Endothelial cell of umbilical vein (primary cell): ENCODE measurements at regions of chr16 and their contacts with region 1.

Region 1: DNA sequence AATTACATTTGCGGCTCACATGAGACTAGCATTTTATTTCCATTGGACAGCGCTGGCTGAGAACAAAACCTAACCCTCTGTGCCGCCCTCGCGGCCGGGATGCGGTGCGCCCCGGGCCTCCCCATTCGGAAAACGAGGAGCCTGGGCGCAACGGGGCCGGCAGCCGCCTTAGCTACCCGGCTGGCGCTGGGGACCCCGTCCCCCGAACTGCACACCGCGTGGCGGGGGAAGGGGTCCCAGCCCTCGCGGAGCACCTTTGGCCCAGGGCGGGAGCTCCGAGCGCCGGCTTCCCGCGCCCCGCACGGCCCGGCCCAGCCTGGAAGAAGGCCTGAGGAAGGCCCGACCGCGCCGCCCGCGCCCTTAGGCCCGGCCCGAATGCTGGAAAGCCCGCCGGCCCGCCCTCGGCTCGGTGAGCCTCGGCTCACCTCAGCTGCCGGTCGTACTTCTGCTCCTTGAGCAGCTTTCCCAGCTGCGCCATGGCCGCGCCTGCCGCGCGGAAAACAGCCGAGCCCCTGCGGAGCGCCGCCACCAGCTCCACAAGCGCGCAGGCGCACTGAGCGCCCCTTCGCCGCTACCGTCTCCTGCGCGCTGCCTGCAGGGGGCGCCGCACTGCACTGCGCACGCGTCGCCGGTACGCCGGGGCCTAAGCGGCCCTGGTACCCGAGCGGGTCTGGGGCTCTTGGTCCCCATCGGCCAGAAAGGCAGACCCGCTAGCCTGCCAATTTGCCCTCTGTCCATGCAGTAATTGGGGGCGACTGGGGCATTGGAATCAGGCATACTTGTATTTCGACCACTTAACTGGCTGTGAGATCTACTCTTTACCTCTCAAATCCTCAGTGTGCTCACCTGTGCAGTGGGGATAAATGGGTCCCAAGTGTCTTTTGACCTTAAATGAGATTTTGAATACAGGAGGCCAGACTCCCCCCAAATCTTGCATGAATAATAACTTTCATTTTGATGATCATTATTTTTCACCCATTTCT is at the start of gene NAE1:
- DNase-seq: peak; percentile 91
- H3K4me3 ChIP-seq: peak within 1 kb of the TSS; percentile 64 to 90 (median 88)
- H3K27ac ChIP-seq: peak within 1 kb of the TSS; percentile 38
- H3K4me1 ChIP-seq: peaks cover 8% of the 10 kb centered on the region
- H3K27me3 ChIP-seq: peaks cover 2 to 15% of the 10 kb centered on the region in 2 experiments
- CTCF ChIP-seq: peak; percentile 99
- POLR2A ChIP-seq: peak; percentile 91
- total RNA-seq, gene NAE1: 64.3 and 67.6 TPM in 2 replicates

Region 2: GRCh38 chr16:66650707-66651473 is 179.8 kb before region 1 on chr16:
- CTCF ChIA-PET with region 1: interaction called, 14 read pairs
- POLR2A ChIA-PET with region 1: no interaction called
- dilution Hi-C with region 1: no loop called
- intact Hi-C with region 1: no loop called
- DNase-seq: peak; percentile 81
- H3K4me3 ChIP-seq: no peak overlapping the region
- H3K27ac ChIP-seq: no peak overlapping the region
- H3K4me1 ChIP-seq: no peaks in the 10 kb centered on the region
- H3K27me3 ChIP-seq: no peaks in the 10 kb centered on the region
- CTCF ChIP-seq: peak; percentile 94
- POLR2A ChIP-seq: no peak

Region 3: DNA sequence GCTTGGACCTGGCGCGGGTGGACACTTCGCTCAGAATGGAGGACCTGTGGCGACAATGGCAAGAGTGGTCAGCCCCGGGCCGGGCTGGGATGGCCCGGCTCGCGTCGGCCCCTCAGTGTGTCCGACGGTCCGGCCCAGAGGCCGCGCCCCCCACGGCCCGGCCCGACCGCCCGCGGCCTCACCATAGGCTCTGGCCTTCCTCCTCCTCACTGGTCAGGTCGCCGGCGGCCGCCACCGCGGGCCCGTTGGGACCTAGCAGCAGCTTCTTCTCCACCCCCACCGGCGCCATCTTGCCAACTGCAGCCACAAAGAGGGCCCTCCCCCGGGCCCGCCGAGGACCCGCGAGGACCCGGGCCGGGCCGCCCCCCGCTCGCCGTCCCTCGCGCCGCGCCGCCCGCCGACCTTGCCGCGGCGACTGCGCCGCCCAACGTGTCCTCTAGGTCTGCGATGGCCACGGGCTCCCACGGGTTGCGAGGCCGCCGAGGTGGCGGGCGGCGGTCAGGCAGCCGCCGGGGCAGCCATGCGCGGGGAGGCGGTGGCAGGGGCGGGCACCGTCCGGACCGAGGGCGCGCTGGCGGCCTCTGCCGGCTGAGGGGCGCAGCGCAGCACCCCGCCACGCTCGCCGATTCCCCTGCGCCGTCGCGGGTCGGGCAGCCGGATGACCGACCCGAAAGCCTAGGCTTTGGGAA is 79.3 kb before region 1 on chr16 and contains the start of gene DYNC1LI2:
- CTCF ChIA-PET with region 1: interaction called, 20 read pairs
- POLR2A ChIA-PET with region 1: no interaction called
- dilution Hi-C with region 1: no loop called
- intact Hi-C with region 1: loop called (anchors 5 kb)
- DNase-seq: peak; percentile 60
- H3K4me3 ChIP-seq: peak within 1 kb of the TSS; percentile 87 to 95 (median 92)
- H3K27ac ChIP-seq: peak within 1 kb of the TSS; percentile 95
- H3K4me1 ChIP-seq: peaks cover 20% of the 10 kb centered on the region
- H3K27me3 ChIP-seq: peaks cover 3 to 4% of the 10 kb centered on the region in 2 experiments
- CTCF ChIP-seq: peak; percentile 76 to 86
- POLR2A ChIP-seq: peak; percentile 59
- total RNA-seq, gene DYNC1LI2: 156 and 159 TPM in 2 replicates

Region 4: DNA sequence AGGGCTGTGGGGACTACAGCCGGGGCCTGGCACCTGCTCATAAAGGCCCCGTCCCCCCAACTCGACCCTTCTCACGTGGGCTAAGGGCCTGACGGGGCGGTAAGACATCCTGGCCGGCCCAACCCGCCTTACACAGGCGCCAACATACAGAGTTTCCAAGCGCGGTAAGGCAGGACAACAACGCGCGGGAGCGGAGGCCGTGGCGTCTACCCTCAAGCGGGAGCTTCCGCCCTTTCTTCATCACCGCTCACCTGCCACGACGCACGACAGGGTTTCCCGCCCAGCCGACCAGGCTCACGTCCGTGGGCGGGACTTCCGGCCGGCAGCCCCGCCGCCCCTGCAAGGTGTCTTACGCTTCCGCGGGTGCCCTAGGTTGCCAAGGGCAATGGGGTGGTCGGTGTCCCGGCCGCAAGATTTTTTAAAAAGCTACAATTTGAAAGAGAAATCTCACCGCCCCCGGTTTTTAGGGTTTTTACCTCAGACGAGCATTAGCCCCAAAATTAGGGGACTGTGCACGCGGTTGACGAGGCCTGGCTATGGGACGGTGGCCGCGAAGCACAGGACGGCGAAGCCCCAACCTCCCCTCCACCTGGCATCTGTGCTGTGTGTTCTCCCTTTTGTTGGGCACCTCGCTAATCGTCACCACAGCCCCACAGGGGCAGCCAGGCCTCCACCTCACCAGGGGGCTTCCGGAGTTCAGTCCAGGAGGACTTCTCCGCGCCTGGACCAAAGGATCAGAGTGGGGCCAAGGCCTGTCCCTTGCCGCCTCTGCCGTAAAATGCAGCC is 29.2 kb before region 1 on chr16 and contains the start of gene TERB1:
- CTCF ChIA-PET with region 1: interaction called, 13 read pairs
- POLR2A ChIA-PET with region 1: no interaction called
- dilution Hi-C with region 1: no loop called
- intact Hi-C with region 1: no loop called
- DNase-seq: no peak
- H3K4me3 ChIP-seq: no peak within 1 kb of the TSS
- H3K27ac ChIP-seq: no peak within 1 kb of the TSS
- H3K4me1 ChIP-seq: no peaks in the 10 kb centered on the region
- H3K27me3 ChIP-seq: no peaks in the 10 kb centered on the region
- CTCF ChIP-seq: no peak
- POLR2A ChIP-seq: no peak
- total RNA-seq, gene TERB1: not detected in 2 replicates

Region 5: GRCh38 chr16:66844342-66845079 is 13.8 kb after region 1 on chr16 and contains the start of gene CA7:
- CTCF ChIA-PET with region 1: interaction called, 36 read pairs
- POLR2A ChIA-PET with region 1: no interaction called
- dilution Hi-C with region 1: no loop called
- intact Hi-C with region 1: no loop called
- DNase-seq: no peak
- H3K4me3 ChIP-seq: peak within 1 kb of the TSS in 1 of 3 experiments; percentile 1
- H3K27ac ChIP-seq: no peak within 1 kb of the TSS
- H3K4me1 ChIP-seq: peaks cover 2% of the 10 kb centered on the region
- H3K27me3 ChIP-seq: peaks cover 46 to 50% of the 10 kb centered on the region in 2 experiments
- CTCF ChIP-seq: no peak
- POLR2A ChIP-seq: no peak
- total RNA-seq, gene CA7: not detected in 2 replicates

Region 6: DNA sequence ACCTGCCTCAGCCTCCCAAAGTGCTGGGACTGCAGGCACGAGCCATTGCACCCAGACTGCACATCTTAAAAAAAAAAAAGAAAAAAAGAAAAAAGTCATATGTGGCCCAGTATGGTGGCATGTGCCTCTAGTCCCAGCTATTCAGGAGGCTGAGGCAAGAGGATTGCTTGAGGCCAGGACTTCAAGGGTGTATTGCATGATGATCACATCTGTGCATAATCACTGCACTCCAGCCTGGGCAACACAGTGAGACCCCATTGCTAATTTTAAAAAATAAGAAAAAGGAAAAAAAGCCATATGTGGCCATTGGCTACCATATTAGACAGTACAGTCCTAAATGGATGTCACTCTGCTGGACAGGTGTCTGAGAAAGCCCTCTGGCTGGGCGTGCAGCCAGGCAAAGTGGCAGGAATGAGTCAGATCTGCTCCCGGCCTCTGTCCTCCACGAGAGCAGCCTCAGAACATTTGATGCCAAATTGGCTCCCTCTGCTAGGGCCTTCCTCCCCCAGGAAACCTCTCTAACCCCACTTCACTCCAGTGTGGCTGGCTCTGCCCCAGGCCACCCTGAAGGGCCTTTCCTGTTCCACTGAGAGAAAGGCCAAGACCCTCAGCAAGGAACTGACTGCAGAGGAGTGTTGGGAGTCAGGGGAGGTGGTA is 28.2 kb after region 1 on chr16:
- CTCF ChIA-PET with region 1: interaction called, 17 read pairs
- POLR2A ChIA-PET with region 1: no interaction called
- dilution Hi-C with region 1: no loop called
- intact Hi-C with region 1: no loop called
- DNase-seq: peak; percentile 72
- H3K4me3 ChIP-seq: no peak overlapping the region
- H3K27ac ChIP-seq: no peak overlapping the region
- H3K4me1 ChIP-seq: no peaks in the 10 kb centered on the region
- H3K27me3 ChIP-seq: no peaks in the 10 kb centered on the region
- CTCF ChIP-seq: no peak
- POLR2A ChIP-seq: no peak

Region 7: DNA sequence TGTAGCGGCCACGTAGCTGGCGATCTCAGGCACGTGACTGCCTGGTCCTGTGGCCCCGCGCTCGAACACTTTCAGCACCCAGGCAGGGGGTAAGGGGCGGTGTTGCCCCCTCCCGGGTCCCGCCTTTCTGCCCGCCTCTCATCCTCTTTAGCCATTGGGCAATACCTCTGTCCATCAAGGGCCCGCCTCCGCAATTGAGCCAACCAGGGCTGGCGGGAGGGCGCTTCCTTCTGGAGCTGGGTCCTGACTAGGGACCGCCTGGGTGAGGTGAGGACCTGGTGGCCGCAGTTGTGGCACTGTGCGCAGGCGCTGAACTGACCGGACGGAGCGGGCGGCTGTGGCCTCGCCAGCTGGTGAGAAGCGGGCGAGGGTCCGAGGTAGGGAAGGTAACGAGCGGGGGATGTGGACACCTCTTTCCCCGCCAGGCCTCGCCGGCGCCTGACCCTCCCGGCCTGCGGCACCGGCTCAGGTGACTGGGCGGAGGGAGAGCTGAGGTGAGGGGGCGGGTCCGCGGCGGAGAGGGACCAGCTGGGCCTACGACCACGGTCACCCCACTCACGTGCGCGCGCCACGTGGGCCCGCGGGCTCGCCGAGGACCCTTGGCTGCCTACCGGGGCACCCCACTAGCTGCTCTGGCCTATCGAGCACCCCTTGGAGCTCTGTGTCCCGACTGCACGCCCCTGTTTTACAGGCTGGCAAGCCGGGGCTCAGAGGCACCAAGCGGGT is 49.7 kb after region 1 on chr16 and contains the start of gene PDP2:
- CTCF ChIA-PET with region 1: interaction called, 69 read pairs
- POLR2A ChIA-PET with region 1: no interaction called
- dilution Hi-C with region 1: no loop called
- intact Hi-C with region 1: no loop called
- DNase-seq: peak; percentile 93
- H3K4me3 ChIP-seq: peak within 1 kb of the TSS; percentile 9 to 83 (median 57)
- H3K27ac ChIP-seq: no peak within 1 kb of the TSS
- H3K4me1 ChIP-seq: peaks cover 7% of the 10 kb centered on the region
- H3K27me3 ChIP-seq: no peaks in the 10 kb centered on the region
- CTCF ChIP-seq: no peak
- POLR2A ChIP-seq: no peak
- total RNA-seq, gene PDP2: 9.3 and 9.5 TPM in 2 replicates

Region 8: DNA sequence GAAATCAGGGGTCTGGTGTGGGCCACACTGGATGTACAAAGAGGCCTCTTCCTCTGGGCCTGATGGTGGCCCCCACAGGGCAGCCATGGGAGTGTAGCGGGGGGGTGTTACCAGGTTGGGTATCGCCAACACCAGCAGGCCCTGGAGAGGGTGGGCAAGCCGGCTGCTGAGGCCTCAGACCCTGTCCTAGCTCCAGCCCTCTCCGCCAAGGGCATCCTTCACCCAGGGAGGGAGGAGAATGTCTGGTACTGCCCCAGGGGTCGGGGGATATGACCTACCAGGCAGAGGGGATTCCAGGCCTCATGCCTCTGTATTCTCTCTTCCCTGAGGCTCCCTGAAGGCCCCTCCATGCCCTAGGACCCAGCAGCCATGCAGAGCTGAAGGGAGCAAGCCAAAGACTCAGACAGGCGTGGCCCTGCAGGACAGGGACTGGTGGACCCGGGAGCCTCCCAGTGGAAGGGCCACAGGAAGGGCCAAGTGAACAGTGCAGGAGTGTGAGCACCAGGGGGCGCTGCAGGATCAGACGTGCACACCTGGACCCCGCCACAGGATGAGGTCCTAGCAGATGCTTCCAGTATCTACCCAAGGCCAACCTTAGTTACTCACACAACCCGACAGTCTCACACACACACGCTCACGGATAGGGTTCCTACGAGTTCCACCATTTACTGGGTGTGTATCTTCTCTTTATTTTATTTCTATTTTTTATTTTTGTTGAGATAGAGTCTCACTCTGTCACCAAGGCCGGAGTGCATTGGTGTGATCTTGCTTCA is 146.8 kb after region 1 on chr16:
- CTCF ChIA-PET with region 1: no interaction called
- POLR2A ChIA-PET with region 1: no interaction called
- dilution Hi-C with region 1: no loop called
- intact Hi-C with region 1: no loop called
- DNase-seq: peak; percentile 60
- H3K4me3 ChIP-seq: no peak overlapping the region
- H3K27ac ChIP-seq: no peak overlapping the region
- H3K4me1 ChIP-seq: no peaks in the 10 kb centered on the region
- H3K27me3 ChIP-seq: no peaks in the 10 kb centered on the region
- CTCF ChIP-seq: peak; percentile 86 to 89
- POLR2A ChIP-seq: no peak